ENCODE measurements at regions of chr19 and their contacts with region 1.

Region 1: GRCh38 chr19:19404879-19405860 is at the start of gene GATAD2A:
- DNase-seq: peak; percentile 94
- H3K4me3 Mint-ChIP-seq: peak within 1 kb of the TSS; percentile 95
- H3K27ac Mint-ChIP-seq: peak within 1 kb of the TSS; percentile 93
- H3K4me1 Mint-ChIP-seq: peaks cover 62% of the 10 kb centered on the region
- H3K27me3 Mint-ChIP-seq: no peaks in the 10 kb centered on the region
- total RNA-seq, gene GATAD2A: 114 TPM

Region 2: DNA sequence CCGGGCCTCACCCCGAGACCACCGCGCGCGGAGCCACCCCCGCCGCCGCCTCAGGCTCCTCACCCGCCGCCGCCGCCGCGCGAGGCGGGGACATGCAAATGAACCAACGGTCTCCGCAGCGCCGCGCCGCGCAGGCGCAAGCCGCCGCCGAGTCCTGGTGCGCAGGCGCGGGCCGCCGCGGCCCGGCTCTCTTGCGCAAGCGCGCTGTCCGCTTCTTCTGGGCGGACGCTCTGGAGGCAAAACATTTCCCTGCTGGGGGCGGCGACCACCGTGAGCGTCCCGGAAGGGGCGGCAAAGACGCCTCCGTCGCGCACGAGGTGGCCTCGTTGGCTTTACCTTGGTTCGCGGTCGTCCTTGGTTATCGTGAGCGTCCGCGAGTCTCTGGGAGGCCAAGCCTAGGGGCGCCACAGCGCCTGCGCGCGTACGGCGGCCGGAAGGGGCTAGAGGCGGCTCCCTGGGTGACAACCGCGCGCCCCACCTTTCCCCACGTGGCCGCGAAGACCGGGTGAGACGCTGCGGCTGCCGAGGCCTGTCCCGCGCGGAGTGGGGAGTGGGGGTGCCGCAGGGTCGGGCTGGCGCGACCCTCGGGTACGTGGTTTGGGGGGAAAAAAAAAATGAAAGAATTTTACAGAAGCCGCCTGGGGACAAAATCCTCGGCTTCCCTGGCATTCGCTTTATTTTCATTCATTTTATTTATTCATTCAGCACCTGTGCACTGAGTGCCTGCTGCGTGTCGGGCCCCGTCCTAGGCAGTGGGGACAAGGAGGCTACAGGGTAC is 371.6 kb before region 1 on chr19 and contains the starts of genes ARMC6 and SUGP2:
- CTCF ChIA-PET with region 1: no interaction called
- POLR2A ChIA-PET with region 1: no interaction called
- intact Hi-C with region 1: loop called (anchors 5 kb)
- DNase-seq: peak; percentile 91
- H3K4me3 Mint-ChIP-seq: peak within 1 kb of the TSS; percentile 89
- H3K27ac Mint-ChIP-seq: peak within 1 kb of the TSS; percentile 84
- H3K4me1 Mint-ChIP-seq: peaks cover 30% of the 10 kb centered on the region
- H3K27me3 Mint-ChIP-seq: no peaks in the 10 kb centered on the region
- total RNA-seq, gene ARMC6: 24.4 to 26.2 TPM
- total RNA-seq, gene SUGP2: 98.1 to 102 TPM

Region 3: GRCh38 chr19:19320362-19321142 is 84.6 kb before region 1 on chr19 and contains the starts of genes MAU2 and SUGP1:
- CTCF ChIA-PET with region 1: no interaction called
- POLR2A ChIA-PET with region 1: no interaction called
- intact Hi-C with region 1: loop called (anchors 5 kb)
- DNase-seq: peak; percentile 94
- H3K4me3 Mint-ChIP-seq: peak within 1 kb of the TSS; percentile 94
- H3K27ac Mint-ChIP-seq: peak within 1 kb of the TSS; percentile 96
- H3K4me1 Mint-ChIP-seq: peaks cover 35% of the 10 kb centered on the region
- H3K27me3 Mint-ChIP-seq: no peaks in the 10 kb centered on the region
- total RNA-seq, gene MAU2: 38.6 to 40.9 TPM
- total RNA-seq, gene SUGP1: 39.2 to 44.0 TPM

Region 4: DNA sequence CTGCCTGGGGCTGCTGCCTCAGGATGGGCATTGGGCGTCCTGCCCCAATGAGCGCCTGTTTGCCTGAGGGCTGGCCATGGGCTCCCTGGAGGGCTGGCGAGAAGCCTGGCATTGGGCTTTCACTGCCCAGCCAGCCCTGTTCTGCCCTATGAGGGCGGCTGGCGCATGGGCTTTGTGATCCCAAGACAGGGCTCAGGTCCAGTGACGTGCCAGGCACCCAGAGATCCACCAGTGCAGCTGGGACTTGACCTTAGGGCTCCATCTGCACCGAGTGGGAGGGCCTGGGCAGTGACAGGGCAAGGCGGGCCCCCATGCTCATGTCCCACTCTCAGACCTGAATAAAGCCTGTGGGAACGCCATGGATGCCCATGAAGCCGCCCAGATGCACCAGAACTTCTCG is 50.2 kb before region 1 on chr19:
- CTCF ChIA-PET with region 1: no interaction called
- POLR2A ChIA-PET with region 1: no interaction called
- intact Hi-C with region 1: no loop called
- DNase-seq: no peak
- H3K4me3 Mint-ChIP-seq: no peak overlapping the region
- H3K27ac Mint-ChIP-seq: no peak overlapping the region
- H3K4me1 Mint-ChIP-seq: peaks cover 14% of the 10 kb centered on the region
- H3K27me3 Mint-ChIP-seq: no peaks in the 10 kb centered on the region

Region 5: DNA sequence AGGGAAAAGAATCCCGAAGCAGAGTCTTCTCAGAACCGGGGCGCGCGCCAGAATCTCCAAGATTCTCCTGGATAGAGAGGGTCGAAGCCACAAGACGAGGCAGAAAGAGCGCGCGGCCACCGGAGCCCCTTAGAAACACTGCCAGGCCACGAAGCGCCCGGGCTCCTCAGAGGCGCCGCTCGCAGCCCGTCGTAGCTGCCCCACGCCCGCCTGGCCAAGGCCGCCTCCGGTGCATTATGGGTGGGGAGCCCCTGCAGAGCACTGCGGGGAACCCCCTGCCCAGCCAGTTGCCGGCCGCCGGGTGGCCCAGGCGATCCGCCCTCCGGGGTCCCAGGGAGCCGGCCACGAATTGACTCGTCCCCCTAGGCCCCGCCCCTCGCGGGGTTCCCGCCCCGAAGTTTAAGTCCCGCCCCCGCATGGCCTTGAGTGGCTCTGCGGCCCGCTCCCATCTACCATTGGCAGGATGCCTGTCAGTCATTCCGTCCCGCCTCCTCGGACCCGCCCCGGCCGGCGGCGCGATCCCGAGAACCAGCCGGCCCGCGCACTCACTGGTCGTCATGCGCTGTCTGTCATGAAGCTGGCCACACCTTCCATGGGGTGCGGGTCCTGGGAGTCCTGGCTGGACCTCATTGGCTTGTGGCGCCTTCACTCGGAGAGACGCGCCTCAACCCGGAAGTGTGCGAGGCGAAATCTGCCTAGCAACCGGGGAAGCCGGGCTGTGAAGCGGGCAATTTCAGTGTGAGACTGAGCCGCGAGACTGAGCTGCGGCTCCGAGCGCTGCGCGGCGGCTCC is 19.9 kb before region 1 on chr19:
- CTCF ChIA-PET with region 1: interaction called, 6 read pairs
- POLR2A ChIA-PET with region 1: interaction called, 12 read pairs
- intact Hi-C with region 1: loop called (anchors 1 kb)
- DNase-seq: peak; percentile 100
- H3K4me3 Mint-ChIP-seq: peak overlapping the region; percentile 80
- H3K27ac Mint-ChIP-seq: peak overlapping the region; percentile 85
- H3K4me1 Mint-ChIP-seq: peaks cover 35% of the 10 kb centered on the region
- H3K27me3 Mint-ChIP-seq: no peaks in the 10 kb centered on the region

Region 6: DNA sequence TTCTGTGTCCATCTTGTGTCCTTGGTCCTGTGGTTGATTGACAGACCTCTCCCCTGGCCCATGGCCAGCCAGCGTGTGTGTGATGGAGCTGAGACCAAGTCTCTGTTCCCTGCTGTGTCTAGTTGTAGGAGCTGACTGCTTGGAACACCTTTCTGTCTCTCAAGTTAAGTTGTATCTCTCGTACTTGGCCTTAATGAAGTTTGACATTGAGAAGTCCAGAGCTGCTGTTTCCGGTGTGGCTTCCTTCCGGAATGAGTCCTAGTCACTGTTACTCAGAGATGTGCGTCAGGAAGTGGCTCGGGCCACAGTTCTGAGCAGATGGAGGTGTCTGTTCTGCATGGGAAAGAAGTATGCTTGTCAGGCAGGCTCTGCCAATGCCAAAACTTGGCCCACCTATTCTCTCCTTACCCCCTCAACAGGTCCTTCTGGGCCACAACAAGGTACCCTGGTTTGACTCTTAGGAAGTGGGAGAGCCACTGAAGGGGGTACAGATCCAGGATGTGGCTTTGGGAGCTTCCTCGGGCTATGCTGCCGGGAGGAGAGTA is 54.6 kb after region 1 on chr19:
- CTCF ChIA-PET with region 1: interaction called, 21 read pairs
- POLR2A ChIA-PET with region 1: interaction called, 8 read pairs
- intact Hi-C with region 1: loop called (anchors 1 kb)
- DNase-seq: peak; percentile 86
- H3K4me3 Mint-ChIP-seq: peak overlapping the region; percentile 72
- H3K27ac Mint-ChIP-seq: peak overlapping the region; percentile 93
- H3K4me1 Mint-ChIP-seq: peaks cover 79% of the 10 kb centered on the region
- H3K27me3 Mint-ChIP-seq: no peaks in the 10 kb centered on the region

Measured in activated CD4-positive, alpha-beta memory T cell treated with anti-CD3 and anti-CD28 coated beads for 36 hours (primary cell).